CD8-positive, alpha-beta T cell (primary cell): ENCODE measurements at regions of chrX and their contacts with region 1.

Region 1: DNA sequence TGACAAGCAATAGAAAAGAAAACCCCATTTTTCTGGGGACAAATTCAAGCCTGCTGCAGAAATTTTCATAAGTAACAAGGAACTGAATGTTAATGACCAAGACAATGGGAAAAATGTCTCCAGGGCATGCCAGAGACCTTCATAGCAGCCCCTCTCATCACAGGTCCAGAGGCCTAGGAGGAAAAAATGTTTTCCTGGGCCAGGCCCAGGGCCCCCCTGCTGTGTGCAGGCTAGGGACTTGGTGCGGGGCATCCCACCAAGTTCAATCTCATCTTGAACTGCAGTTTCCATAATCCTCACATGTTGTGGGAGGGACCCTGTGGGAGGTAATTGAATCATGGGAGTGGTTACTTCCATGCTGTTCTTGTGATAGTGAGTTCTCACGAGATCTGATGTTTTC is 211.5 kb upstream of the GRIA3 start:
- DNase-seq: no peak
- ATAC-seq: no peak
- H3K4me3 ChIP-seq: no peak overlapping the region
- H3K4me3 Mint-ChIP-seq: no peak overlapping the region
- H3K27ac ChIP-seq: no peak overlapping the region
- H3K27ac Mint-ChIP-seq: no peak overlapping the region
- H3K4me1 ChIP-seq: no peaks in the 10 kb centered on the region
- H3K4me1 Mint-ChIP-seq: no peaks in the 10 kb centered on the region
- H3K27me3 ChIP-seq: no peaks in the 10 kb centered on the region
- H3K27me3 Mint-ChIP-seq: no peaks in the 10 kb centered on the region
- CTCF ChIP-seq: no peak

Region 2: DNA sequence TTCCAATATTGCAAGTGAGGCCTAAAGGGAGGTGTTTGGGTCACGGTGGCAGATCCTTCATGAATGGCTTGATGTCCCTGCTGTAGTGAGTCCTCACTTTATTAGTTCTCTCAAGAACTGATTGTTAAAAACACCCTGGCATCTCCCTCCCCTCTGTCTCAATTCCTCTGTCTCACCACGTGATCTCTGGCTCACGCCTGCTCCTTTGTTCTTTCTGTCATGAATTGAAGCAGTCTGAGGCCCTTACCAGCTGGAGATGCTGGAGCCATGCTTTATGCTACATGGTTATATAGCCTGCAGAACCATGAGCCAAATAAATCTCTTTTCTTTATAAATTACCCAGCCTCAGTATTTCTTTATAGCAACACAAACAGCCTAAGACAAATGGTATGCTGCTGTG is 769.2 kb before region 1 on chrX:
- CTCF ChIA-PET with region 1: no interaction called
- POLR2A ChIA-PET with region 1: no interaction called
- intact Hi-C with region 1: loop called in 1 of 2 experiments (anchors 5 kb)
- DNase-seq: no peak
- ATAC-seq: no peak
- H3K4me3 ChIP-seq: no peak overlapping the region
- H3K4me3 Mint-ChIP-seq: no peak overlapping the region
- H3K27ac ChIP-seq: no peak overlapping the region
- H3K27ac Mint-ChIP-seq: no peak overlapping the region
- H3K4me1 ChIP-seq: no peaks in the 10 kb centered on the region
- H3K4me1 Mint-ChIP-seq: no peaks in the 10 kb centered on the region
- H3K27me3 ChIP-seq: no peaks in the 10 kb centered on the region
- H3K27me3 Mint-ChIP-seq: no peaks in the 10 kb centered on the region
- CTCF ChIP-seq: no peak